AG04449 (cell line): ENCODE measurements at regions of chr15 and their contacts with region 1.

Region 1: GRCh38 chr15:70875001-70875782 is 17.0 kb downstream of the THAP10 start:
- DNase-seq: no peak
- H3K4me3 ChIP-seq: no peak overlapping the region
- CTCF ChIP-seq: peak; percentile 54

Region 2: DNA sequence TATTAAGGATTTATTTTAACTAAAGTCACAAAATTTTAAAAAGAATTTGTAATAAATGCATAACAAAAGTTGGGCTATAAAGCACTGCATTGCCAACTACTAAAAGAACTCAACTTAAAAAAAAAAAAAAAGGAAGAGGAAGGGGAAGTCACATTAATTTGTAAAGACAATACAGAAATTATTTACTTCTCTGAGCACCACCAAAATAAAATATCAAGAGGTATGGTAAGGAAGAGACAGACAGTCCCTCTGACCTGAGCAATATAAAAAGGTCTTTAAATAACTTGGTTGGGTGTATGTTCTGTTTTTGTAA is 195.3 kb before region 1 on chr15:
- CTCF ChIA-PET with region 1: interaction called, 52 read pairs
- POLR2A ChIA-PET with region 1: no interaction called
- DNase-seq: no peak
- H3K4me3 ChIP-seq: no peak overlapping the region
- CTCF ChIP-seq: no peak

Region 3: GRCh38 chr15:70853821-70854666 is 21.1 kb before region 1 on chr15 and contains the start of gene LARP6:
- CTCF ChIA-PET with region 1: interaction called, 25 read pairs
- POLR2A ChIA-PET with region 1: interaction called, 7 read pairs
- DNase-seq: no peak
- H3K4me3 ChIP-seq: peak within 1 kb of the TSS; percentile 89
- CTCF ChIP-seq: no peak

Region 4: GRCh38 chr15:70863450-70864218 is 11.6 kb before region 1 on chr15:
- CTCF ChIA-PET with region 1: interaction called, 20 read pairs
- POLR2A ChIA-PET with region 1: interaction called, 4 read pairs
- DNase-seq: no peak
- H3K4me3 ChIP-seq: no peak overlapping the region
- CTCF ChIP-seq: no peak

Region 5: DNA sequence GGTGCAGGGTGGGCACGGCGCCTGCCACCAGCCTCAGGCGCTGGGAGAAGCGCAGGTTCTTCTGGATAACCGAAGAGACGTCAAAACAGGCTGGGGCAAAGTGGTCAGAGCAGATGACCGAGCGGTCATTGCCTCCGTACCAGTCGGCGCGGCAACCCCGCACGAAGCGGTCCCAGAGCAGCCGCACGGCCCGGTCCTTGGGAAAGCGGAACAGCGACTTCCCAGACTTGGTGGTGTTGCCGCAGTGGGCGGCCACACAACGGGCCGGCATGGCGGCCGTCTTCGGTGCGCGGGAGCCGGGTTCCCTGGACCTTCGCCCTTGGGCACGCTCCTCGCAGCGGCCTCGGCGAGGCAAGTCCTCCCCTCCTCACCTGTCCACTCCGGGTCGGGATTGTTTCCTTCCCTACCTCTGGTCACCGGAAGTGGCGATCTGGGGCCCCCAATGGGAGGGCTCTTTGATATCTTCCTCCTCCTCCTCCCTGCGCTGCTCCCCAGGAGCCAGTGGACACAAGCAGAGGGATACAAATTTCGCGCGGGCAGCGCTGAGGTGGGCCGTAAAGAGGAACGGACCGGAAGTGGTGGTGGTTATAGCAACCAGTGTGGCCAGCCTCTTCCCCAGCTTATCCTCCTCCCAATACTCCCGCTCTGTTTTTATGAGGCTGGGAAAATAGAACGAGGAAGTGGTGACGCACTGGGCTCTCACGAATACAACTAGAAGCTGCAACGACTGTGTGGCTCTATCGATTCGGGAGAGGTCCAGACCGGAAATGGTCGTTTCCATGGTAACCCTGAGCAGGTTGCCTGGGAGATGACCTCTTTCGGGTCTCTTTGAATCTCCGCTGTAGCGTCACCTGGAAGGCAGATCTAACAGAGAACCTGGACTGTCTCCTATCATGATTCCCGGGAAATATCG is 17.1 kb after region 1 on chr15 and contains the starts of genes LRRC49 and THAP10:
- CTCF ChIA-PET with region 1: interaction called, 27 read pairs
- POLR2A ChIA-PET with region 1: no interaction called
- DNase-seq: peak; percentile 77
- H3K4me3 ChIP-seq: peak within 1 kb of the TSS; percentile 70
- CTCF ChIP-seq: no peak